ENCODE measurements at regions of chr20 and their contacts with region 1.

Region 1: GRCh38 chr20:61170496-61171320 is 81.4 kb upstream of the CDH4 start:
- DNase-seq: peak; percentile 21 to 71
- H3K4me3 ChIP-seq: no peak overlapping the region
- H3K27ac ChIP-seq: no peak overlapping the region
- H3K4me1 ChIP-seq: peaks cover 4 to 11% (median 9%) of the 10 kb centered on the region in 4 experiments
- H3K27me3 ChIP-seq: peaks cover 0 to 30% (median 7%) of the 10 kb centered on the region in 4 experiments; a peak in 4 of 7 replicates
- CTCF ChIP-seq: no peak
- EP300 ChIP-seq: no peak
- POLR2A ChIP-seq: no peak
- RAD21 ChIP-seq: no peak

Region 2: DNA sequence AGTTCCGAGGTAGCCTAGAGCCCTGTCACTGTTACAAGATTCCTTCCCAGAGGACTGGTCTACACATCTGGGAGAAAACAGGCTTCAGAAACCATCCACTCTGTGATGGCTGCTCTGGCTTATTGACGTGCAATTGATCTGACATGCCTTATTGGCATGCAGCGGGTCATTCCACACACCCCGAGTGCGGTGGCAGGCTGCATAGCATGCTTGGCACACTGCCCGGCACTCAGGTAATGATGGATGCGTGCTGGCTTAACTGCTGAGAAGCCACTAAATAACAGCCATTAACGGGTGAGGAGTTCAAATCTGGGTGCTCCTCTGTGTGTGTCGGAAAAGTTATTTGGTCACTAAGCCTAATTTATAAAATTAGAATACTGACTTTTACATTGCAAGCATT is 13.5 kb after region 1 on chr20:
- CTCF ChIA-PET with region 1: interaction called, 14 read pairs
- POLR2A ChIA-PET with region 1: no interaction called
- DNase-seq: no peak
- H3K4me3 ChIP-seq: no peak overlapping the region
- H3K27ac ChIP-seq: no peak overlapping the region
- H3K4me1 ChIP-seq: peaks cover 0 to 3% (median 0%) of the 10 kb centered on the region in 4 experiments; a peak in 2 of 7 replicates
- H3K27me3 ChIP-seq: peaks cover 0 to 10% (median under 1%) of the 10 kb centered on the region in 4 experiments; a peak in 5 of 7 replicates
- CTCF ChIP-seq: no peak
- EP300 ChIP-seq: no peak
- POLR2A ChIP-seq: no peak
- RAD21 ChIP-seq: no peak

Measured in H1 (cell line).